Caco-2 (cell line): ENCODE measurements at regions of chr9 and their contacts with region 1.

Region 1: DNA sequence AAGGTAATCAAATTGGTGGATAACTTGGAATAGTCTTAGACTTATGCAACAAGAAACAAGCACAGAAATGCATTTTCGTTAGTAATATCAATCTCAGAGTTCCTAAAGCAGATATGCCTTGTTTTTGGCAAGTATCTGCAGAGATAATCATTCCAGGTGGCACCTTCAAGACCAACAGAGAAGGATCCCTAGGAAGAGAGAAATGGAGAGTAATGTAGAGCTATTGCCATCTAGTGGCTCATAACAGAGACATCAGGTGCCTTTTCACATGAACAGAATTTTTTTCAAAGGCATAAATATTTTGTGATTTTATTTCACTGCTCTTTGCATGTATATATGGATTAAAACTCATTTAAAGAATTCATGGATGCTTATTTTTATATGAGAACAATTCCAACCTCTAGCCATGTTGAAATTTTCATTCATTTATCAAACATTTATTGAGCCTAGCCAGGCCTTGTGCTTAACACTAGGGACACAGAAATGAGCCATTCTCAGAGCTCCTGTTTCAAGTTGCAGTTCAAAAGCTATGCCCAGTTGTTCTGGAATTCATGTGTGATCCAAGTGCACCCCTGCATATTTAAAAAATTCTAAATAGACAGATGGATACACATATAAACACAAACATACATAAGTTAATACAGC is 117.5 kb upstream of the OR13F1 start:
- DNase-seq: peak in 1 of 2 experiments; percentile 11
- H3K4me3 ChIP-seq: no peak overlapping the region
- H3K4me3 Mint-ChIP-seq: no peak overlapping the region
- H3K27ac Mint-ChIP-seq: no peak overlapping the region
- H3K4me1 ChIP-seq: 0 out of 2 replicates have a peak, but pooled peaks cover 7% of the 10 kb centered on the region
- H3K4me1 Mint-ChIP-seq: no peaks in the 10 kb centered on the region
- H3K27me3 ChIP-seq: no peaks in the 10 kb centered on the region
- H3K27me3 Mint-ChIP-seq: peaks cover 9% of the 10 kb centered on the region
- CTCF ChIP-seq: peak; percentile 58 to 66

Region 2: DNA sequence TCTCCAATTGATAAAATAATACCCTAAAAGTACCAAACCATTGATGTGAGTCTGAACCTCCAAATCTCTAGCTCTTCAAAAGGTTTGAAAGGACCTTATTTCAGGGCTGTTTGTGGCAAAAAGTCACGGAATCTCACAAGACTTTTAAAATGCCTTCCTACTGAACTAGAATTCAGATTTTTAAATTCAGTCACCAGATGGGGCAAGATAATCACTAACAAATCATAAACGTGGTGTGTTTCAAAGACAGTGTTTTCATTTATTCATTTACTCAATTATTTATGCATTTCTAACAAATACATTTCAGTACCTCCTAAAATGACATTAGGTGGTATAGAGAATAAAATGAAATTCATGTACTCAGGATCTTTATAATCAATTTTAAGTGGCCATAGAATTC is 360.6 kb before region 1 on chr9:
- CTCF ChIA-PET with region 1: no interaction called
- POLR2A ChIA-PET with region 1: no interaction called
- intact Hi-C with region 1: loop called (anchors 1 kb)
- DNase-seq: no peak
- H3K4me3 ChIP-seq: no peak overlapping the region
- H3K4me3 Mint-ChIP-seq: no peak overlapping the region
- H3K27ac Mint-ChIP-seq: no peak overlapping the region
- H3K4me1 ChIP-seq: no peaks in the 10 kb centered on the region
- H3K4me1 Mint-ChIP-seq: no peaks in the 10 kb centered on the region
- H3K27me3 ChIP-seq: no peaks in the 10 kb centered on the region
- H3K27me3 Mint-ChIP-seq: peaks cover 11% of the 10 kb centered on the region
- CTCF ChIP-seq: no peak

Region 3: DNA sequence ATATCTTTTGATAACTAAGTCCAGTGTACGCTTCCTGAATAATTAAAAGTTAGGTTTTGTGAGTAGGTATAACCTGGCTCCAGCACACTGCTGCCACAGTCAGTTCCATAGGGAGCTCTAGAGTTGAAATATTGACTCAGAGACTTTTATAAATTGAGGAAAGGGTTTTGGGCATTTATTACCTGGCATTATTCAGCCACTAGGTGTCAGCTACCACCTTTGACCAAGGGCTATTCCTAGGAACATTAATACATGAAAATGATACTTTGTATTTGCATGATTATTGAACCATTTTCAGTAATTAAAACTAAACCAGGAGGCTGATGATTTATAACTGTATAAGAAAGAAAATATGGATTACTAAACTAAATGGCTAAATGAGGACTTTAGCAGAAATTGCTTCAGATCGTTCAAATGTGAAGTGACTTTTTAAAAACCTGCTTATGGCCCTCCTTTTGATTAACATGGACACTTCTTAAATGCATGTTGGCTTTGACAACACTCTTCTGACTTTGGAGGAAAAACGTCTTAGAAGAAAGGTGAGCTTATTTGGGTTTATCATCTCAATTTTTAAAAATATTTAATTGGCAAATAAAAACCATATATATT is 209.4 kb before region 1 on chr9:
- CTCF ChIA-PET with region 1: interaction called, 11 read pairs
- POLR2A ChIA-PET with region 1: no interaction called
- intact Hi-C with region 1: loop called (anchors 1 kb)
- DNase-seq: peak in 1 of 2 experiments; percentile 7
- H3K4me3 ChIP-seq: no peak overlapping the region
- H3K4me3 Mint-ChIP-seq: no peak overlapping the region
- H3K27ac Mint-ChIP-seq: no peak overlapping the region
- H3K4me1 ChIP-seq: no peaks in the 10 kb centered on the region
- H3K4me1 Mint-ChIP-seq: no peaks in the 10 kb centered on the region
- H3K27me3 ChIP-seq: no peaks in the 10 kb centered on the region
- H3K27me3 Mint-ChIP-seq: no peaks in the 10 kb centered on the region
- CTCF ChIP-seq: peak; percentile 34 to 36

Region 4: DNA sequence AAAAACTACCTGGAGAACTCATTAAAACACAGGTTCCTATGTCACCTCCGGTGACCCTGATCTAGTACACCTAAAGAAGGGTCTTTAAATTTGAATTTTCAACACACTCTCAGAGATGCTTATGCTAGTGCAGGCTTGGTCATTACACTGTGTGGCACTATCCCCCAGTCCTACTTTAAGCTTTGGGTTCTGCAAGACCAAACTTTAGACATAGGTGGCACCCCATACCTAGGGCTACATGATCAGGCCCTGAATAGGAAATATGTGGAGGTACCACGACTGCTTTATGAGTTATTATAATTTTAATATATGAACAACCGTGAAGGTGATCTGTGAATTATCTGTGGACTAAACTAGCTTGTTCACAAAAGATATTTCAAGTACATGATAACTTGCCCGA is 83.8 kb before region 1 on chr9:
- CTCF ChIA-PET with region 1: no interaction called
- POLR2A ChIA-PET with region 1: no interaction called
- intact Hi-C with region 1: loop called (anchors 1 kb)
- DNase-seq: no peak
- H3K4me3 ChIP-seq: no peak overlapping the region
- H3K4me3 Mint-ChIP-seq: no peak overlapping the region
- H3K27ac Mint-ChIP-seq: no peak overlapping the region
- H3K4me1 ChIP-seq: no peaks in the 10 kb centered on the region
- H3K4me1 Mint-ChIP-seq: no peaks in the 10 kb centered on the region
- H3K27me3 ChIP-seq: no peaks in the 10 kb centered on the region
- H3K27me3 Mint-ChIP-seq: peaks cover 6% of the 10 kb centered on the region
- CTCF ChIP-seq: no peak

Region 5: DNA sequence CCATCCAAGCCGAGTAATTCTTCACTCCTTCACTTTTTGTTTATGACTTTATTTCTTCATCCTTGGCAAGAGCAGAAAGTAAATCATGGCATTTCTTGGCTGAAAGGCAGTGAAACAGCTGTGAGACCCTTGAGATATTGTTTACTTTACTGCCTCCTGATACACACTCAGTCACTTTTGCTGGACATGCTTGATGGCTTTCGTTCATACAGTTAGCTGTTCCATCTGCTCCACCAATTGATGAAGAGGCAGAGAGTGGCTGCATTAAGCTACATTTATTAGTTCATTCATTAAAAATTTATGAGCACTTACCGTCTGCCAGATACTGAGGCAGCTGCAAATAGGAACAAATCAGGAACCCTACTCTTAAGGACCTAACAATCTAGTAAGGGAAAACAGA is 66.9 kb before region 1 on chr9:
- CTCF ChIA-PET with region 1: no interaction called
- POLR2A ChIA-PET with region 1: no interaction called
- intact Hi-C with region 1: no loop called
- DNase-seq: no peak
- H3K4me3 ChIP-seq: no peak overlapping the region
- H3K4me3 Mint-ChIP-seq: no peak overlapping the region
- H3K27ac Mint-ChIP-seq: no peak overlapping the region
- H3K4me1 ChIP-seq: no peaks in the 10 kb centered on the region
- H3K4me1 Mint-ChIP-seq: no peaks in the 10 kb centered on the region
- H3K27me3 ChIP-seq: no peaks in the 10 kb centered on the region
- H3K27me3 Mint-ChIP-seq: no peaks in the 10 kb centered on the region
- CTCF ChIP-seq: no peak